PC-3 (cell line): ENCODE measurements at regions of chr7 and their contacts with region 1.

Region 1: GRCh38 chr7:143490717-143491306 is 13.1 kb downstream of the TAS2R41 start:
- DNase-seq: peak; percentile 39
- ATAC-seq: peak; percentile 82
- H3K4me3 ChIP-seq: no peak overlapping the region
- H3K27ac ChIP-seq: no peak overlapping the region
- H3K4me1 ChIP-seq: no peaks in the 10 kb centered on the region
- H3K27me3 ChIP-seq: no peaks in the 10 kb centered on the region
- CTCF ChIP-seq: peak; percentile 73

Region 2: DNA sequence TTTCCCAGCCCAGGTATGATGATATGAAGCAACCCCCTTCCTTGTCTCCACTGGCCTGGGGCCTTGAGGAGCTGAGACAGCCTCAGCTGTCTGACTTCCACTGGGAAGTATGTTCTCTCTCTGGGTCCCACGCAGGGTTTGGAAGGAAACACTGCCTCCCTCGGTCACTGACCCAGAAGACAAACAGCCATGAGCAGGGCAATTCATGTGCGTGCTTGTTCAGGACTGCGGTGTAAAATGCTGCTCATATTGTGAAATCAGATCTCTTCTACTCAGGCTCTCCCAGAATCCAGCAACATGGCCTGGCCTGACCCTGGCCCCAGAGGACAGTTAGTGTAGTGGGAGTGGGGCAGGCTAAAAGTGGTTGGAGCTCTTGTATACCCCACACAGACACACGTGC is 172.2 kb before region 1 on chr7:
- CTCF ChIA-PET with region 1: no interaction called
- POLR2A ChIA-PET with region 1: no interaction called
- intact Hi-C with region 1: loop called (anchors 10 kb)
- DNase-seq: no peak
- ATAC-seq: no peak
- H3K4me3 ChIP-seq: no peak overlapping the region
- H3K27ac ChIP-seq: no peak overlapping the region
- H3K4me1 ChIP-seq: peaks cover 9% of the 10 kb centered on the region; the same call in 1 of the 2 replicates
- H3K27me3 ChIP-seq: no peaks in the 10 kb centered on the region
- CTCF ChIP-seq: no peak